GM10248 (cell line): ENCODE measurements at regions of chr17 and their contacts with region 1.

Region 1: DNA sequence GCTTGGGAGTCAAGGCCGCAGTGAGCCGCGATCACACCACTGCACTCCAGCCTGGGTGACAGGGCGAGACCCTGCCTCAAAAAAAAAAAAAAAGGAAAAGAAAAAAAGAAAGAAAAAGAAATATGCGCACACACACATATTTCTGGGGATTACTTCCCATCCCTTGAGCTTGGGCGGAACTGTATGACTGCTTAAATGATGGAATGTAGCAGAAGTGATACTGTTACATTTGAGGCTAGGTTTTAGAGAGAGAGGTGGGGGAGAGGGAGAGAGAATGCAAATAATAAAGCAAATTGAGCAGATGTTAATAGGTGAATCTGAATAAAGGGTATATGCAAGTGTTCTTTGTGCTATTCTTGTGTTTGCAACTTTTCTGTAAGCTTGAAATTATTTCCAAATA is 12.0 kb upstream of the USP32 start:
- DNase-seq: no peak
- CTCF ChIP-seq: no peak

Region 2: DNA sequence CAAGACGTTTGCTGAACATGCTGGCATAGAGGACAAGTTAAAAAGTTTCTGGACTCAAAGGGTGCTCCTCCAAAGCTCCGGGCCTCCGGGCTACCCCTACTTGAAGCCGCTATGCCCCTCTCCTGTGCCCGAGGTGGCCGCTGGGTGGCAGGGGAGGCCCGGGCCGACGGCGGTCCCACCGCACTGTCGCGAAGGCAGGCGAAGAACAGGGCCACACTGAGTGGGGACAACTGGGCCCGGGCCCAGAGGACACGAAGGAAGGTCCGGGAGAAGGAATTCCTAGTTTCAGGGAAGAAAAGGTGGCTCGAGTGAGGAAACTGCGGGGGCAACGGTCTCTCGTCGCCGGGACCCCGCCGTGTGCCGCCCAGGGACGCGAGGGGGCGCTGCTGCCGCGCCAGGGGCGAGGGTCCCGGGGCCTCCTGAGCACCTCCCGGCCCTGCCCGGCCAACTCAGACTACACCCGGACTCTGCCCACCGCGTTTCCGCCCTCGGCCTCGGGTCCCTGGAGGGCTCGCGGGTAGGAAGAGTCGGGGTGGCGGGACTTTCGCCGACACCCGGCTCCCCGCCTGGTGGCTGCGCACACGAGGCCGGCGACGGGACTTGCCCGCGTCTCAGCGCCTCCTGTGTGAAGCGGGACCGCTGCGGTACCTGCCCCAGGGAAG is 17.4 kb after region 1 on chr17:
- CTCF ChIA-PET with region 1: interaction called, 14 read pairs
- POLR2A ChIA-PET with region 1: no interaction called
- DNase-seq: peak; percentile 88
- CTCF ChIP-seq: peak; percentile 88